Activated CD4-positive, alpha-beta memory T cell treated with anti-CD3 and anti-CD28 coated beads for 36 hours (primary cell): ENCODE measurements at regions of chr2 and their contacts with region 1.

Region 1: DNA sequence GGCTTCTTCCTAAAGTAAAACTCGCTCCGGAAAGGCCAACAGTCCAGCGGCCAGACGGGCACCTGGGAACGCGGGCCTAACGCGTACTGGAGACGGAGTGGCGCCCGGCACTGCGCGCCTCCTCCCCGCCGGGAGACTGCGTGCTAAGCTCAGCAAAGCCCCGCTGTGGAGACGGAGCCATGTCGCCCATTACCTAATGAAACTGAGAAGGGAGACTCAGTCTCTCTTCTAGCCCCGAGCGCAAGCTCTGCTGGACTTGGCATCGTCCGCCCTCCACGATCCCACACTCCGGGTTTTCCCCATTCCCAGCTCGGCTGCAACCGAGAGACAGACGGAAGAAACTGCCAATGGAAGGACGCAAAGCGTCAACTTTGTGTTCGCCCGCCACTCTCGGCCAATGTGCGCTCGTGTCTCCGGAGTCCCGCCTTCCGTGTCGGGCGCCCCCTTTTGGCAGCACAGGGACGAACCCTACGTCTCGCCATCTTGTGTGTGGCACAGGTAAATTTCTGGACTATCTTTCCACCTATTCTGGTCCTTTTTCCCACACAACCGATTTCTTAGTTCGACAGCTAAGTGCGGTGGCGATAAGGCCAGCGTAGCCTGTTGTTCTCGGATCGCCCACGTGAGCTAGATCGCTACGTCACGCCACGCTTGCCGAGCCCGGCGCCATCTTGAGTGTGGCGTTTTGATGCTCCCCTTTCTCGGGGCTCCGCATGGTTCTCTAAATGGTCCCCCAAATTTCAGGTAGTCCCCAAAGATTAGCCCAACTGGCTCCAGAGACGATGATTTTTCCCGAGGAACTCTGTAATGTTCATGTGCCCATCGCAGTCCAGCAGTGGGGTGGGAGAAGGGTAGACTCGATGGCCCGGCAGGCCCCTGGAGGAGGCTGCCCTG is 1.3 kb upstream of the PTMA start:
- DNase-seq: peak; percentile 98
- H3K4me3 Mint-ChIP-seq: peak overlapping the region; percentile 93
- H3K27ac Mint-ChIP-seq: peak overlapping the region; percentile 100
- H3K4me1 Mint-ChIP-seq: peaks cover 18% of the 10 kb centered on the region
- H3K27me3 Mint-ChIP-seq: peaks cover 3% of the 10 kb centered on the region

Region 2: DNA sequence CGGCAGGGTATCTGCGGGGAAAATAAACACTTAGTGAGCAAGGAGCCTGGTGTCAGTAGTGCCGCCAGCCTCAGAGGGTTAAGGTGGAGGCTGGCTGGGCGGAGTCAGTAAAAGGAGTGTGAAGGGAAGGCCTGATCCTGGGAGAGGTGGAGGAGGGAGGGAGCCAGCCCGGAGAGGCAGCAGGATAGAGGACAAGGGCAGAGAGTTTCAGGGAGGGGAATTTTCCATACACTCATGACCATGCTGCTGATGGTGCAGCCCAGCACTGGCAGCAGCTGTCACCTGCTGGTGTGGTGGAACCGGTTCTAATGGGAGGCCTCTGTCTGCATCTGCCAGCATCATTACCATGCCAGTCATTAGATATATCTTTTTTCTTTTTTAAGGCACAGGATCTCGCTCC is 116.4 kb before region 1 on chr2:
- CTCF ChIA-PET with region 1: no interaction called
- POLR2A ChIA-PET with region 1: no interaction called
- intact Hi-C with region 1: no loop called
- DNase-seq: no peak
- H3K4me3 Mint-ChIP-seq: no peak overlapping the region
- H3K27ac Mint-ChIP-seq: no peak overlapping the region
- H3K4me1 Mint-ChIP-seq: no peaks in the 10 kb centered on the region
- H3K27me3 Mint-ChIP-seq: no peaks in the 10 kb centered on the region

Region 3: DNA sequence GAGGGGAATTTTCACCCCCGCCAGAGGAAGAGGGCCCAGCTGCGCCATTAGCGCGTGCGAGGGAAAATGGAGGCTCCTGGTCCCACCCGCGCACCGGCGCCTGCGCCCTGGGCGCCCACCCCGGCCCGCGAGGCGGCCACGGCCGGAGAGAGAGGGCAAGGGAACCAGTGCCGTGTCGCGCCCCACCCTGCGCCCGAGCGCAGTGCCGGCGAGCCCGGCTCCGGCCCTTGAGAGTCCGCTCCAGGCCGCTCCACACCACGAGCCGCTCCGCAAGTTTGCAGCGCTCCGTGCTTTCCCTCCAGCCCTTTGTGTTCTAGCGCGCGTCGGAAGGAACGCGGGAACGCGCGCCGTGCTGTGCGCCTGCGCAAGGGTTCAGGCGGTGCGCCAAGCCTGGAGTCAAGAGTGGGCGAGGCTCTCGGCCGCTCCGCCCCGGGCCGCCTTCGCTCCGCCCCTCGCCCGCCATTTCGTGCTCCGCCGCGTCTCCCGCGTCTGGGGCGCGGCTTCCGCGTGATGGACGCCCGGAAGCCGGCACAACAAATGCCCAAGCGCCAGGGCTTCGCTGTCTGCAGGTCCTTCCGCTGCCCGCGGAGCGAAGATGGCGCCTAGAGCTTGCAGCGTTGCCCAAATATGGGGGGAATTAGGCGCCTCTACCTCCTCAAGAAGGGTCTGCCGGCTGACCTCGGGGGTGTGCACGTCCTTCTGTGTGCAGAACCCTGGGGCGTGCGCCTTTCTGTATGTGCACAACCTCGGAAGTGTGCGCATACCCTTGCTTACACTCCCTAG is 44.8 kb before region 1 on chr2:
- CTCF ChIA-PET with region 1: interaction called, 6 read pairs
- POLR2A ChIA-PET with region 1: interaction called, 3 read pairs
- intact Hi-C with region 1: loop called (anchors 1 kb)
- DNase-seq: peak; percentile 97
- H3K4me3 Mint-ChIP-seq: peak overlapping the region; percentile 65
- H3K27ac Mint-ChIP-seq: peak overlapping the region; percentile 94
- H3K4me1 Mint-ChIP-seq: peaks cover 12% of the 10 kb centered on the region
- H3K27me3 Mint-ChIP-seq: no peaks in the 10 kb centered on the region

Region 4: GRCh38 chr2:231687133-231687852 is 19.7 kb before region 1 on chr2:
- CTCF ChIA-PET with region 1: interaction called, 578 read pairs
- POLR2A ChIA-PET with region 1: interaction called, 4 read pairs
- intact Hi-C with region 1: no loop called
- DNase-seq: peak; percentile 73
- H3K4me3 Mint-ChIP-seq: no peak overlapping the region
- H3K27ac Mint-ChIP-seq: no peak overlapping the region
- H3K4me1 Mint-ChIP-seq: peaks cover 4% of the 10 kb centered on the region
- H3K27me3 Mint-ChIP-seq: peaks cover 5% of the 10 kb centered on the region

Region 5: DNA sequence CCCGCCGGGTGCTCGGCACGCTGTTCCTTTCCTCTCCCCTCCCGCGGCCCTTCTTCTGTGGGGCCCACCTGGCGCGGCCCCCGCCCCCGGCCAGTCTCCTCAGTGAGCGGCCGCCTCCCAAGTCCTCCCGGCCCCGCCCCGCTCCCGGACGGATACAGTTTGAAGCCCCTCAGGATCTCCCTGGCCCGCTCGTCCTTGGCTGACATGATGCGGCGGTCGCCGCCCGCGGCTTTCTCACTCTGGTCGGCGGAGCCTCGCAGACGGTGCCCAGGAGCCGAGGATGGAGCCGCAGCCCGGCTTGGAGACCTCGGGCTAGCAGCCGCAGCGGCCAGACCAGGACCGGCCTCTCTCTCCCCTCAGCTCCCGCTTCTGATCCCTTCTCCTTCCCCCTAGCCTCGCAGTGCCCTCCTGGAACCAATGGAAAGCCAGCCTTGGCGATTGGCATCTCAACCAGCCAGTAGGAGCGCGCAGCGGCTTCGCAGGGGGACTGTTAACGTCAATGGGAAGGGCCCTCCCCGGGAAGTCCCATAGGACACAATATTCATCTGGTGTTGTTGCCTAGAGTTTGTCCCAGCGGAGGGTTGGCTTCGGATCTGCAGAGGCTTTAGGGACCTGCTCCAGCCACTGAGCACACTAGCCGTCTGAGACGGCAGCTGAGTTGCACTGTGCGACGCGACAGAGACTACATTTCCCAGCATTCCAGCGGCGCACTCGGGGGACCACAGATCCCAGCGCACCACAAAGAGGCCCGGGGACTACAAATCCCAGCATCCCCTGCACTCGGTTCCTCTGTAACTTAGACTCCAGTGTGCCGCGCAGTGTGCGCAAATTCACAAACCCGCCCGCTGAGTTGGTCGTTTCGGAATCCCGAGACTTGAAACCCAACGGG is 74.2 kb after region 1 on chr2 and contains the start of gene PDE6D:
- CTCF ChIA-PET with region 1: interaction called, 9 read pairs
- POLR2A ChIA-PET with region 1: no interaction called
- intact Hi-C with region 1: loop called (anchors 1 kb)
- DNase-seq: peak; percentile 98
- H3K4me3 Mint-ChIP-seq: peak within 1 kb of the TSS; percentile 89
- H3K27ac Mint-ChIP-seq: peak within 1 kb of the TSS; percentile 94
- H3K4me1 Mint-ChIP-seq: peaks cover 52% of the 10 kb centered on the region
- H3K27me3 Mint-ChIP-seq: no peaks in the 10 kb centered on the region
- total RNA-seq, gene PDE6D: 29.5 to 31.1 TPM

Region 6: GRCh38 chr2:232018181-232018580 is 311.2 kb after region 1 on chr2:
- CTCF ChIA-PET with region 1: no interaction called
- POLR2A ChIA-PET with region 1: no interaction called
- intact Hi-C with region 1: no loop called
- DNase-seq: no peak
- H3K4me3 Mint-ChIP-seq: no peak overlapping the region
- H3K27ac Mint-ChIP-seq: no peak overlapping the region
- H3K4me1 Mint-ChIP-seq: peaks cover 7% of the 10 kb centered on the region
- H3K27me3 Mint-ChIP-seq: no peaks in the 10 kb centered on the region